ENCODE measurements at regions of chr5 and their contacts with region 1.

Region 1: GRCh38 chr5:81027481-81028048 is 67.4 kb downstream of the RASGRF2 start:
- DNase-seq: no peak
- ATAC-seq: no peak
- H3K4me3 ChIP-seq: no peak overlapping the region
- H3K4me3 Mint-ChIP-seq: peak overlapping the region in 3 of 10 donors; percentile 19 to 69 (median 47)
- H3K27ac ChIP-seq: no peak overlapping the region
- H3K27ac Mint-ChIP-seq: peak overlapping the region in 4 of 9 donors; percentile 11 to 61 (median 28)
- H3K4me1 ChIP-seq: peaks cover 8 to 25% of the 10 kb centered on the region in 2 donors
- H3K4me1 Mint-ChIP-seq: peaks cover 16 to 84% (median 66%) of the 10 kb centered on the region in 7 donors
- H3K27me3 ChIP-seq: no peaks in the 10 kb centered on the region
- H3K27me3 Mint-ChIP-seq: no peaks in the 10 kb centered on the region

Region 2: GRCh38 chr5:79999722-80000121 is 1027.8 kb before region 1 on chr5:
- CTCF ChIA-PET with region 1: no interaction called
- POLR2A ChIA-PET with region 1: no interaction called
- intact Hi-C with region 1: loop called in 1 of 2 experiments (anchors 5 kb)
- DNase-seq: no peak
- ATAC-seq: no peak
- H3K4me3 ChIP-seq: no peak overlapping the region
- H3K4me3 Mint-ChIP-seq: no peak overlapping the region
- H3K27ac ChIP-seq: no peak overlapping the region
- H3K27ac Mint-ChIP-seq: no peak overlapping the region
- H3K4me1 ChIP-seq: no peaks in the 10 kb centered on the region
- H3K4me1 Mint-ChIP-seq: peaks cover 0 to 6% (median 0%) of the 10 kb centered on the region in 7 donors
- H3K27me3 ChIP-seq: no peaks in the 10 kb centered on the region
- H3K27me3 Mint-ChIP-seq: peaks cover 0 to 19% (median 8%) of the 10 kb centered on the region in 5 donors

Measured in naive thymus-derived CD4-positive, alpha-beta T cell (primary cell).